ENCODE measurements at regions of chr17 and their contacts with region 1.

Region 1: GRCh38 chr17:27601069-27601975 is 29.7 kb upstream of the LGALS9 start:
- DNase-seq: peak; percentile 67
- H3K4me3 Mint-ChIP-seq: no peak overlapping the region
- H3K27ac Mint-ChIP-seq: no peak overlapping the region
- H3K4me1 Mint-ChIP-seq: peaks cover 10% of the 10 kb centered on the region
- H3K27me3 Mint-ChIP-seq: no peaks in the 10 kb centered on the region

Region 2: DNA sequence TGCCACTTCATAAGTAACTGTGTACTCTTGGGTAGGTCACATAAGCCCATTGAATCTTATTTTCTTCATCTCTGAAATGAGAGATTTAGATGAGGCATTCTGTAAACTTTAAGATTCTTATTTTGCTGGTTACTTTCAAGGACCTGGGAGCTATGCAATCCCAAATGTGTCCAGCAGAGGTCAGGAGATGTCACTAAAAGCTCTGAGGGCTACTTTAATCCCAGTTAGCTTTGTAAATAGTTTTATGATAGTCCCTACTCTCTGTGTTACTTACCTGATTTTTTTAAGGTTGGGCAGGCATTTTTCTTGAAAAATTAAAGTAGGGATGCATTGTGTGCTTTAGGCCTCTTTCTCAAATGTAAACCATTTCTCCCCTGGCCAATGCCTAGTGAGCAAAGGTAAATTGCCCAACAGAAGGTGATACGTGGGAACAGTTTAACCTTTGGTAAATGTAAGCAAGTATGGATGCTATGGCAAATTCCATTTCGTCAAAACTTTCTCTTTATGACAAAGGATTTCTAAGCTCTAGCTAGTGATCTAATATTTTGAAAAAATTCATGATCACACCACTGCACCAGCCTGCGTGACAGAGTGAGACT is 364.5 kb before region 1 on chr17:
- intact Hi-C with region 1: loop called (anchors 1 kb)
- DNase-seq: peak; percentile 39
- H3K4me3 Mint-ChIP-seq: no peak overlapping the region
- H3K27ac Mint-ChIP-seq: no peak overlapping the region
- H3K4me1 Mint-ChIP-seq: peaks cover 27% of the 10 kb centered on the region
- H3K27me3 Mint-ChIP-seq: peaks cover 18% of the 10 kb centered on the region

Region 3: DNA sequence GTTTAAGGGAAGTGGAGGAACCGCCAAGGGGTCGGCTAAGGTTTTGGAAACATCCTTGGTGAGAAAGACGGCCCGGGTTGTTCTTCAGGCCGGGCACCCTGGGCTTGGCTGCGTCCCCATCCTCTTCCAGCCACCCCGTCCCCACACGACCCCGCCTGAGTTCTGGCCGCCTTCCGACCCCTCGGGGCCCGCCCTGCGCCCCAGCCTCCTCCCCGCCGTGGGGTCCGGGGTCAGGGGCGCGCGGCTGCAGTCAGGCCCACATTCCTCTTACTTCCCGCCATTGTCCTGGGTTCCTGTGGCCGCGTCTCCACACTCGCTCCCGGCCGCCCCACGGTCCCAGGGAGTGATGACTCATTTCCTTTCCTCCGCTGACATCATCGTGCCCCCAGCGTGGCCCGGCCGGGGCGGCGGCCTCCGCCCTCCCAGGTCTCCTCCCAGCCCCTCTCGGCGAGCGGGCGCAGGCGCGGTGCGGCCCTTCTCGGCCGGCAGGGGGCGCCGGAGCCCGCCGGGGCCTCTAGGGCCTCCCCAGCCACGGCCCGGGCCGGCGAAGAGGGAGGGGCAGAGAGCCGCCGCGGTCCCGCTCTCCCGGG is 247.8 kb before region 1 on chr17:
- intact Hi-C with region 1: loop called (anchors 1 kb)
- DNase-seq: peak; percentile 84
- H3K4me3 Mint-ChIP-seq: peak overlapping the region; percentile 78
- H3K27ac Mint-ChIP-seq: peak overlapping the region; percentile 96
- H3K4me1 Mint-ChIP-seq: peaks cover 26% of the 10 kb centered on the region
- H3K27me3 Mint-ChIP-seq: no peaks in the 10 kb centered on the region

Region 4: GRCh38 chr17:27381007-27381501 is 220.3 kb before region 1 on chr17:
- intact Hi-C with region 1: loop called (anchors 1 kb)
- DNase-seq: peak; percentile 69
- H3K4me3 Mint-ChIP-seq: no peak overlapping the region
- H3K27ac Mint-ChIP-seq: no peak overlapping the region
- H3K4me1 Mint-ChIP-seq: peaks cover 6% of the 10 kb centered on the region
- H3K27me3 Mint-ChIP-seq: peaks cover 17% of the 10 kb centered on the region

Region 5: DNA sequence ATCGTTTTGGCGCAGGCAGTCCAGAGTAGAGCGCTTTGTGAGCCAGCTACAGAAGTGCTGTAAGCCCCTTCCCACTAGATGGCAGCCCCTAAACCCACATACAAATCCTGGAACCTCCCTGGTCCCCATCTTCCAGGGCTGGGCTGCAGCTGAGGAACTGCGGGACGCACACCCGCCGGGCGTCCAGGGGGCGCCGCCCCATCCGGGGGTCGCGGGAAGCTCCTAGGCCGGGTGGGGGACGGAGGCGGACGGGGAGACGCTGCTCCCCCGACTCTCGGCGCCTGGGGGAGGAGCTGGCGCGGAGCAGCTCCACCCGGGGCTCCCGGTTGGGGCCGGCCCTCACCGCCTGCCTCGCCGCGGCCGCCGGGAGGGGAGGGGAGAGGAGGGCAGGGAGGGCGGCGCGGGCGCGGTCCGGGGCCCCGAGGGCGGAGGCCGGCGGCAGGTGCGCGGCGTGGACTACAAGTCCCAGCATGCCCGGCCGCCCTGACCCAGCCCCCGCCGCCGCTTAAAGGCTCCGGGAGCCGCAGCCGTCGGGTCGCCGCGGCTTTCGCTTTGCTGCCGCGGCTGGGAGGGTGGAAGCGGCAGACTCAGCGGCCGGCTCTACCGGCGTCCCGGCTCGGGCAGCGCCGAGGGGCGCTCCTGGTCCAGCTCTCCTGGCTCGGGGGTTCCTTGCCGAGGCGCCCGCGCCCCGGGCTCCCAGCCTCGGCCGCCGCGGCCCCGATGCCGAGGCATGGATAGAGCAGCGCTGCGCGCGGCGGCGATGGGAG is 145.2 kb before region 1 on chr17 and contains the start of gene KSR1:
- intact Hi-C with region 1: loop called (anchors 2 kb)
- DNase-seq: peak; percentile 77
- H3K4me3 Mint-ChIP-seq: peak within 1 kb of the TSS; percentile 95
- H3K27ac Mint-ChIP-seq: peak within 1 kb of the TSS; percentile 57
- H3K4me1 Mint-ChIP-seq: peaks cover 35% of the 10 kb centered on the region
- H3K27me3 Mint-ChIP-seq: peaks cover 11% of the 10 kb centered on the region
- total RNA-seq, gene KSR1: 96.5 and 101 TPM in 2 replicates

Region 6: GRCh38 chr17:27569257-27569722 is 32.0 kb before region 1 on chr17:
- intact Hi-C with region 1: loop called (anchors 5 kb)
- DNase-seq: peak; percentile 27
- H3K4me3 Mint-ChIP-seq: no peak overlapping the region
- H3K27ac Mint-ChIP-seq: peak overlapping the region; percentile 47
- H3K4me1 Mint-ChIP-seq: peaks cover 76% of the 10 kb centered on the region
- H3K27me3 Mint-ChIP-seq: no peaks in the 10 kb centered on the region

Region 7: DNA sequence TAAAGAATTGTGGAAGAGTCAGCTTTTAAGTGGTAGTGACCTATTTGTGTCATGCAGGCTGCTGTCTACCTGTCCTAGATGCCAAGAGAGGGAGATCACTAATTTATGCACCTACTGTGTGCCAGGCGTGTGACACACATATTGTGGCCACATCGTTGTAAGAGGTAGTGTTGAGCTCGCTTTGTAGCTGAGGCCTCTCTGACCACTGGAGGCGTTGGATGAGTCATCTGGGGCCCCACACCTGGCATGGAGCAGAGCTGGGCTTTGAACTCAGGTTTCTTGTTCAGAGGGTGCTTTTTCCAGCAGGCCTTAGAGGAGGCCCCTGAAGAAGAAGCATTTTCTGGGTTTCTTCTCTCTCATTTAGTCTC is 22.6 kb before region 1 on chr17:
- intact Hi-C with region 1: loop called (anchors 2 kb)
- DNase-seq: peak; percentile 41
- H3K4me3 Mint-ChIP-seq: no peak overlapping the region
- H3K27ac Mint-ChIP-seq: peak overlapping the region; percentile 90
- H3K4me1 Mint-ChIP-seq: peaks cover 68% of the 10 kb centered on the region
- H3K27me3 Mint-ChIP-seq: no peaks in the 10 kb centered on the region

Measured in activated T-helper 2 cell treated with anti-CD3 and anti-CD28 coated beads, Interferon-gamma antibody, Interleukin-2, Interleukin-4, amounts not matched to agents 10 μg/mL and 5 μg/mL and 100 μg/mL, durations not matched to agents 14 hours and 24 hours and 36 hours (primary cell).